Adrenal gland (tissue), 19 donors: ENCODE measurements at regions of chr2 and their contacts with region 1.

Region 1: DNA sequence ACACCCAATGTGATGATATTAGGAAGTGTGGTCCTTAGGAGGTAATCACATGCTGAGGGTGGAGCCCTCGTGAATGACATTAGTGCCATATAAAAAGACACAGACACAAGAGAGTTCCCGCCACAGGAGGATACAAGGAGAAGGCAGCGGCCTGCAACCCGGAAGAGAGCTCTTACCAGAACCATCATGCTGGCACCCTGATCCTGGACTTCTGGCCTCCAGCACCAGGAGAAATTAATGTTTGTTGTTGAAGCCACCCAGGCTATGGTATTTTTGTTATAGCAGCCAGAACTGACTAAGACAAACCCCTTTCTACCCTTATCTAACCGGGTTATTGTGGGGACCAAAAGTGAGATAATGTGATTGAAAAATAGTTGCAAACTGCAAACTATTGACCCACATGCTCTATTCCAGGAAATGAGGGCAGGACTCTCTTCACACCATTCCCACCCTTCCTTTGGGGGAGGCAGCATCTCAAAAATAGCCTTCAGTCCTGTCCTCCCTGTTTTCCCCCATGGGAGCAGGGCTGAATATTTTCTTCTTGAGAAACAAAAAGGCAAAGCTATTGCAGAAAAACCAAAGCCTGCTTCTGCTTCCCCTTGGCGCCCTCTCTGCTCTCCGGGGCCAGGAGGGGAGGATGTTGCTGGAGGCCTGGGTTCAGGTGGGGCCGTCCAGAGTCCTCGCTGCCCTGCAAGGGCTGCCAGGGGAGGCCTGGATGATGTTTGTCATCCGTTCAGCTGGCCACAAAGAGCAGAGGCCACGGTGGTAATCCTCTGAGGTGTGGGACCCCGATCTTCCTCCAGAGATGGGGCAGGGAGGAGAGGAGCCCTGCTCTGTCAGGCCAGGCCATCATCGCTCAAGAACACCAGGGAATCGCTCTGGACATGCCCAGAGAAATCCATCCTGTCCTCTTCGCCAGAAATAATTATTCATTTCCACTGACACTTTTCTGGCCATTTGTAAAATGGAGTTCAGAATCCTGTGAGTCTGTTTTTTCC is 73.8 kb upstream of the HAAO start:
- DNase-seq: peak in 3 of 7 donors; percentile 10 to 36 (median 30)
- H3K4me3 ChIP-seq: no peak overlapping the region
- H3K27ac ChIP-seq: peak overlapping the region in 3 of 5 donors; percentile 37 to 70 (median 67)
- H3K4me1 ChIP-seq: peaks cover 3 to 15% of the 10 kb centered on the region in 2 donors
- H3K27me3 ChIP-seq: no peaks in the 10 kb centered on the region
- CTCF ChIP-seq: no peak
- POLR2A ChIP-seq: no peak

Region 2: GRCh38 chr2:42928692-42929545 is 62.7 kb after region 1 on chr2:
- intact Hi-C with region 1: loop called in 1 of 2 experiments (anchors 10 kb)
- DNase-seq: no peak
- H3K4me3 ChIP-seq: no peak overlapping the region
- H3K27ac ChIP-seq: peak overlapping the region in 4 of 5 donors; percentile 15 to 91 (median 68)
- H3K4me1 ChIP-seq: peaks cover 12 to 81% of the 10 kb centered on the region in 2 donors
- H3K27me3 ChIP-seq: no peaks in the 10 kb centered on the region
- CTCF ChIP-seq: peak in 3 of 6 experiments; percentile 8 to 20 (median 10)
- POLR2A ChIP-seq: no peak